ENCODE measurements at regions of chr5 and their contacts with region 1.

Region 1: DNA sequence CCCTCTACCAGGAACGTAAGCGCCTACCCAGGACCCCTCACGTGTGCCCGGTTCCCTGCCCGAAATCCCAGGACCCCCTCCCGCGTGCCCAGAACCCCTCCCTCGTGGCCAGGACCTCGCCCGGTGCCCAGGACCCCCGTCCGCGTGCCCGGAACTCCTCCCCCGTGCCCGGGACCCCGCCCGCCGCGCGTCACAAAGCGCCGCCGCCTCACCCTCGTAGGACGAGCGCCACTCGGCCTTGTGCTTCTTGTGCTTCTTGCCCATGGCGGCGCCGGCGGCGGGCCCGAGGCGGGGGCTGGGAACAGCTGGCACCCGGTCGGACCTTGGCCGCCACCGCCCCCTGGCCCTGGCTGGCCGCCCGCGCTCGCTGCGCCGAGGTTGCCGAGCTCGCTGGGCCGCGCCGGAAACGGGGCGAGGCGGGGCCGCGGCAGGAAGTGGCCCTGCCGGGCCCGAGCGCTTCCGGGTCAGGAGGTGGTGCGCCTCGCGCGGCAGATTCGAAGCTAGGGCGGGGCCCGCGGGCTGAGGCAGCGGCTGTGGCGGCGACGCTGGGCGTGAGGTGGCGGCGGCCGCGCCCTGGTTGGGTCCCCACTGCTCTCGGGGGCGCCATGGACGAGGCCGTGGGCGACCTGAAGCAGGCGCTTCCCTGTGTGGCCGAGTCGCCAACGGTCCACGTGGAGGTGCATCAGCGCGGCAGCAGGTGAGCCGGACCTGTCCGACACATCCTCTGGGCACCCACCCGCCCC is at the starts of genes BRD9 and TRIP13:
- DNase-seq: peak; percentile 40 to 94 (median 88)

Region 2: GRCh38 chr5:442335-443238 is 450.0 kb before region 1 on chr5 and contains the start of gene EXOC3:
- intact Hi-C with region 1: loop called (anchors 10 kb)
- DNase-seq: peak in 41 of 42 donors; percentile 40 to 89 (median 77)

Measured in head of caudate nucleus (tissue), 42 donors.